Naive thymus-derived CD4-positive, alpha-beta T cell (primary cell): ENCODE measurements at regions of chr1 and their contacts with region 1.

Region 1: GRCh38 chr1:35769759-35770446 is at the start of gene CLSPN:
- DNase-seq: peak; percentile 75 to 95 (median 88)
- ATAC-seq: peak; percentile 97
- H3K4me3 ChIP-seq: peak within 1 kb of the TSS; percentile 87
- H3K4me3 Mint-ChIP-seq: peak within 1 kb of the TSS; percentile 97 to 100 (median 99)
- H3K27ac ChIP-seq: peak within 1 kb of the TSS; percentile 88
- H3K27ac Mint-ChIP-seq: peak within 1 kb of the TSS; percentile 73 to 96 (median 94)
- H3K4me1 ChIP-seq: no peaks in the 10 kb centered on the region
- H3K4me1 Mint-ChIP-seq: peaks cover 0 to 29% (median 11%) of the 10 kb centered on the region in 7 donors
- H3K27me3 ChIP-seq: no peaks in the 10 kb centered on the region
- H3K27me3 Mint-ChIP-seq: no peaks in the 10 kb centered on the region
- total RNA-seq, gene CLSPN: 0.11 to 48.7 (median 0.64) TPM

Region 2: GRCh38 chr1:35451125-35451528 is 318.8 kb before region 1 on chr1:
- CTCF ChIA-PET with region 1: interaction called, 4 read pairs
- POLR2A ChIA-PET with region 1: interaction called, 3 read pairs
- intact Hi-C with region 1: loop called (anchors 1 to 5 kb)
- DNase-seq: peak; percentile 44 to 79 (median 68)
- ATAC-seq: peak; percentile 89
- H3K4me3 ChIP-seq: no peak overlapping the region
- H3K4me3 Mint-ChIP-seq: peak overlapping the region in 9 of 10 donors; percentile 14 to 86 (median 55)
- H3K27ac ChIP-seq: peak overlapping the region; percentile 34
- H3K27ac Mint-ChIP-seq: peak overlapping the region; percentile 31 to 94 (median 77)
- H3K4me1 ChIP-seq: peaks cover 12 to 19% of the 10 kb centered on the region in 2 donors
- H3K4me1 Mint-ChIP-seq: peaks cover 24 to 38% (median 31%) of the 10 kb centered on the region in 7 donors
- H3K27me3 ChIP-seq: no peaks in the 10 kb centered on the region
- H3K27me3 Mint-ChIP-seq: no peaks in the 10 kb centered on the region

Region 3: DNA sequence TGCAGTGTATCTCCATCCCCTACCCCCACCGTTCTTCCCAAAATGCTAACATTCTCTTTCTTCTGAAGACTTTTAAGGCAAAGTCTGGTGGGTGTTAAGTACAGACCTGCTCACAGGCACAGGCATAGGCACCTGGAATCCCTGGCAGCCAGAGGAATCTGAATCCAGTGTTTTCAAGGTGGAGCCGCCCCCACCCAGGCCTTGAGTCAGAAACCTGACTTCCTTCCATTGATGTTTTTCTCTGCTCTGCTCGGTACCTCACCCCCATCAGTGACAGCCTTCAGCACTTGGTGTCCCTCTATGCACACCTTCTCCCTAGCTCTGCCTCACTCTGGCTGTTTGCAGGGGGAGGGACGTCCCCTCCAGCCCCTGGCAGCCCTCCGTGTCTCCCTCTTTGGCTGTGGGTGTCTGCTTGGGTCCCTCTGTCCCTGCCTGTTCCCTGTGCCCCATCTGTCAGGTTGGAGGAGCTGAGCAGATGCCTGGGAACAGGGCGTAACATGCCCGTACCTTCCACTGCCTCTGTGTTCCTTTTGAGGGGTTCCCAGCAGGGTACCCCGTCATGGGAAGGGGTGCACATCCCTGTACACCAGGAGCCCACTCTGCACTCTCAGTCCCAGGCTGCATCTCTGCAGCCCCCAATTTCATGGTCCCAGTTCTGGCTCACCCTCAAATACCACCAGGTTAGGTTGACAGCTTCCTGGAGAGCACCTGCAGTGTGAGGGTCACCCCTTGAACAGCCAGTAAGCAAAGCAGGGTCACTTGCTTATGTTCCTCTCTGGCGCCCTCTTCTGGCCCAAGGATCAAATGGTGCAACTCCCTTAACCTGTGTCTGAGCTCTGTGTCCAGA is 205.6 kb before region 1 on chr1:
- CTCF ChIA-PET with region 1: interaction called, 8 read pairs
- POLR2A ChIA-PET with region 1: interaction called, 5 read pairs
- intact Hi-C with region 1: loop called (anchors 1 kb)
- DNase-seq: peak; percentile 58 to 82 (median 70)
- ATAC-seq: peak; percentile 79
- H3K4me3 ChIP-seq: no peak overlapping the region
- H3K4me3 Mint-ChIP-seq: peak overlapping the region in 1 of 10 donors; percentile 56
- H3K27ac ChIP-seq: no peak overlapping the region
- H3K27ac Mint-ChIP-seq: peak overlapping the region in 7 of 9 donors; percentile 23 to 91 (median 60)
- H3K4me1 ChIP-seq: no peaks in the 10 kb centered on the region
- H3K4me1 Mint-ChIP-seq: peaks cover 25 to 41% (median 31%) of the 10 kb centered on the region in 7 donors
- H3K27me3 ChIP-seq: no peaks in the 10 kb centered on the region
- H3K27me3 Mint-ChIP-seq: no peaks in the 10 kb centered on the region

Region 4: GRCh38 chr1:35715568-35716002 is 54.3 kb before region 1 on chr1:
- CTCF ChIA-PET with region 1: interaction called, 5 read pairs
- POLR2A ChIA-PET with region 1: no interaction called
- intact Hi-C with region 1: loop called (anchors 1 to 2 kb)
- DNase-seq: peak; percentile 44 to 79 (median 66)
- ATAC-seq: peak; percentile 82
- H3K4me3 ChIP-seq: no peak overlapping the region
- H3K4me3 Mint-ChIP-seq: peak overlapping the region in 6 of 10 donors; percentile 0 to 53 (median 44)
- H3K27ac ChIP-seq: no peak overlapping the region
- H3K27ac Mint-ChIP-seq: peak overlapping the region in 3 of 9 donors; percentile 3 to 73 (median 59)
- H3K4me1 ChIP-seq: peaks cover 15 to 35% of the 10 kb centered on the region in 2 donors
- H3K4me1 Mint-ChIP-seq: peaks cover 26 to 34% (median 33%) of the 10 kb centered on the region in 7 donors
- H3K27me3 ChIP-seq: no peaks in the 10 kb centered on the region
- H3K27me3 Mint-ChIP-seq: no peaks in the 10 kb centered on the region

Region 5: GRCh38 chr1:35807614-35808449 is 37.9 kb after region 1 on chr1 and contains the start of gene AGO4:
- CTCF ChIA-PET with region 1: no interaction called
- POLR2A ChIA-PET with region 1: interaction called, 7 read pairs
- intact Hi-C with region 1: loop called (anchors 2 to 5 kb)
- DNase-seq: peak; percentile 3 to 57 (median 24)
- ATAC-seq: peak; percentile 69
- H3K4me3 ChIP-seq: peak within 1 kb of the TSS; percentile 73
- H3K4me3 Mint-ChIP-seq: peak within 1 kb of the TSS; percentile 87 to 98 (median 92)
- H3K27ac ChIP-seq: peak within 1 kb of the TSS; percentile 73
- H3K27ac Mint-ChIP-seq: peak within 1 kb of the TSS; percentile 89 to 95 (median 90)
- H3K4me1 ChIP-seq: peaks cover 14 to 33% of the 10 kb centered on the region in 2 donors
- H3K4me1 Mint-ChIP-seq: peaks cover 22 to 44% (median 43%) of the 10 kb centered on the region in 7 donors
- H3K27me3 ChIP-seq: no peaks in the 10 kb centered on the region
- H3K27me3 Mint-ChIP-seq: peaks cover 0 to 2% (median 0%) of the 10 kb centered on the region in 5 donors
- total RNA-seq, gene AGO4: 13.2 to 32.6 (median 17.8) TPM